ENCODE measurements at regions of chr10 and their contacts with region 1.

Region 1: DNA sequence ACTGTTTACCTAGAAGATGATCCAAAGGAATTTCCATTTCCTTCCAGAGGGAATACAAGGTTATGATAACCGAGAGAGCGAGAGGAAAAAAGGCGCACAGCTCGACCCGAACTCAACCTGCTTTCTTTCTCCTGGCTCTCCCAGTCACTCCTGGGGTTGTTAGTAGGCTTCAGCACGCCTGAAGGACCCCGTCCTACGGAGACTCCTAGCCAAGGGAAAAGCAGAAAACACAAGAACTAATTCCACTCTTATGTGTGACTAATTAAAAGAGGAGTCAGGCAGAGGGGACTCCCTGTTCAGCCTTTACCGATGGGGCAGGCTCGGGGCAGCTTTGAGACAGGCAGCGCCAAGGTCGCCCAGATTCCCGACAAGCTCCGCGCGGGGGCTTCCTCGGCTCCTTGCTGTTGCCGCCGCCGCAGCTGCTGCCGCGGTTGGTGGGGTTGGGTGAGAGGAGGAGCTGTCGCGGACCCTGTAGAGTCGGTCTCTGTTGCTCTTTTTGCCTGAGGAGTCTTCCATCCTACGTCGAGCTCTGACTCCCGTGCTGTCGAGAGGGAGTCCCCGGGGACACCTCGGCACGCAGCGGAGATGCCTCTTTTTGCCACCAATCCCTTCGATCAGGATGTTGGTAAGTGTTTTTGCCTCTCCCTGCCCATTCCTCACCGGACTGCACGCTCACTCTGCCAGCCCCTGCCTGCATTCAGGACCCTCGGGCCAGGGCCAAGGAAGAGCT is at the start of gene STAM:
- DNase-seq: peak; percentile 85
- ATAC-seq: peak; percentile 95
- H3K4me3 ChIP-seq: peak within 1 kb of the TSS; percentile 92 to 96 (median 95)
- H3K27ac ChIP-seq: peak within 1 kb of the TSS; percentile 98
- H3K4me1 ChIP-seq: peaks cover 49% of the 10 kb centered on the region
- H3K27me3 ChIP-seq: no peaks in the 10 kb centered on the region; a peak in 1 of 5 replicates
- CTCF ChIP-seq: peak; percentile 25; the same call in 1 of the 2 replicates
- EP300 ChIP-seq: no peak
- POLR2A ChIP-seq: peak; percentile 81 to 86; a peak in 3 of 4 replicates
- RAD21 ChIP-seq: peak; percentile 17; the same call in 1 of the 2 replicates
- total RNA-seq, gene STAM: 25.1 and 31.7 TPM in 2 replicates

Region 2: DNA sequence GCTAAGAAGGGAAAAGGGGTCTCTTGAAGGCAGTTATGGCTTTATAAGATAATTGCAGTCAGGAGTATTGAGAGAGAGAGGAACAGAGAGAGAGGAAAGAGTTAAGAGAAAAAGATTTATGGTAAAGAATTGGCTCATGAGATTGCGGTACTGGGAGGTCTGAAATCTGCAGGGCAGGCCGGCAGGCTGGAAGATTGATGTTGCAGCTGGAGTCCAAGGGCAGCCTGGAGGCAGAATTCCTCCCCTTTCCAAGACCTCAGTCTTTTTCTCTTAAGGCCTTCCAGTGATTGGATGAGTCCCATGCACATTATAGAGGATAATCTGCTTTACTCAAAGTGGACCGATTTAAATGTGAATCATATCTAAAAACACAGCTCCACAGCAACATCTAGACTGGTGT is 95.2 kb before region 1 on chr10:
- CTCF ChIA-PET with region 1: no interaction called
- POLR2A ChIA-PET with region 1: no interaction called
- in situ Hi-C with region 1: no loop called
- intact Hi-C with region 1: no loop called
- DNase-seq: no peak
- ATAC-seq: no peak
- H3K4me3 ChIP-seq: no peak overlapping the region
- H3K27ac ChIP-seq: no peak overlapping the region
- H3K4me1 ChIP-seq: no peaks in the 10 kb centered on the region
- H3K27me3 ChIP-seq: peaks cover 0 to 5% of the 10 kb centered on the region in 2 experiments; a peak in 1 of 5 replicates
- CTCF ChIP-seq: no peak
- EP300 ChIP-seq: no peak
- POLR2A ChIP-seq: no peak
- RAD21 ChIP-seq: no peak

Region 3: DNA sequence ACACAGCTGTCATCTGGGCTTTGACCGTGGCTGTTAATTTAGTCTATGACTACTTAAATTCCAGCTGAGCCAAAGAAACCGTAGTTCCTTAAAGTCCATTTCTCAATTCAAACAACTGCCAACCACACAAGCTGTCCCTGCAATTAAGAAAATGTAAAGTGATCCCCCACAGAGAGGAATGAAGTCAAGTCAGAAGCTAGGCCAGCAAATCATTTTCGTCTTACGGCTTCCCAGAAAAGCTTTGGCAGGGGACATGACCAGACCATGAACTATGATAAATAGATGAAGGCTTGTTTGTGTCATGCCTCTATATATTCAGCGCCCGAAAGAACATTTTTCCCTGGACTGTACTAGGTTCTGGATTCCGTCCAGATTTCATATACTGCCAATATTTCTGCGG is 81.3 kb before region 1 on chr10:
- CTCF ChIA-PET with region 1: no interaction called
- POLR2A ChIA-PET with region 1: no interaction called
- in situ Hi-C with region 1: no loop called
- intact Hi-C with region 1: no loop called
- DNase-seq: no peak
- ATAC-seq: no peak
- H3K4me3 ChIP-seq: no peak overlapping the region
- H3K27ac ChIP-seq: no peak overlapping the region
- H3K4me1 ChIP-seq: no peaks in the 10 kb centered on the region
- H3K27me3 ChIP-seq: peaks cover 1 to 14% of the 10 kb centered on the region in 2 experiments; a peak in 2 of 5 replicates
- CTCF ChIP-seq: no peak
- EP300 ChIP-seq: no peak
- POLR2A ChIP-seq: no peak
- RAD21 ChIP-seq: no peak

Region 4: GRCh38 chr10:17617031-17617911 is 26.6 kb before region 1 on chr10 and contains the start of gene HACD1:
- CTCF ChIA-PET with region 1: no interaction called
- POLR2A ChIA-PET with region 1: interaction called, 71 read pairs
- in situ Hi-C with region 1: no loop called
- intact Hi-C with region 1: loop called (anchors 2 kb)
- DNase-seq: peak; percentile 73
- ATAC-seq: peak; percentile 90
- H3K4me3 ChIP-seq: peak within 1 kb of the TSS; percentile 69 to 84 (median 79)
- H3K27ac ChIP-seq: peak within 1 kb of the TSS; percentile 97
- H3K4me1 ChIP-seq: peaks cover 11% of the 10 kb centered on the region; the same call in 1 of the 2 replicates
- H3K27me3 ChIP-seq: peaks cover 0 to 8% of the 10 kb centered on the region in 2 experiments; a peak in 1 of 5 replicates
- CTCF ChIP-seq: peak; percentile 80
- EP300 ChIP-seq: 0 out of 4 replicates have a peak, but pooled peaks of 1 of the 2 experiments have one; percentile 14
- POLR2A ChIP-seq: peak; percentile 82 to 83
- RAD21 ChIP-seq: no peak; the same call in none of the 2 replicates
- total RNA-seq, gene HACD1: 31.7 and 47.6 TPM in 2 replicates

Region 5: GRCh38 chr10:17633353-17633752 is 10.6 kb before region 1 on chr10:
- CTCF ChIA-PET with region 1: no interaction called
- POLR2A ChIA-PET with region 1: interaction called, 11 read pairs
- in situ Hi-C with region 1: no loop called
- intact Hi-C with region 1: no loop called
- DNase-seq: no peak
- ATAC-seq: no peak
- H3K4me3 ChIP-seq: no peak overlapping the region
- H3K27ac ChIP-seq: no peak overlapping the region
- H3K4me1 ChIP-seq: peaks cover 13% of the 10 kb centered on the region
- H3K27me3 ChIP-seq: no peaks in the 10 kb centered on the region; a peak in 1 of 5 replicates
- CTCF ChIP-seq: no peak
- EP300 ChIP-seq: no peak
- POLR2A ChIP-seq: no peak
- RAD21 ChIP-seq: no peak

Region 6: GRCh38 chr10:17655567-17656146 is 11.7 kb after region 1 on chr10:
- CTCF ChIA-PET with region 1: no interaction called
- POLR2A ChIA-PET with region 1: interaction called, 26 read pairs
- in situ Hi-C with region 1: no loop called
- intact Hi-C with region 1: no loop called
- DNase-seq: peak; percentile 67
- ATAC-seq: peak; percentile 25; the same call in 2 of the 3 replicates
- H3K4me3 ChIP-seq: no peak overlapping the region
- H3K27ac ChIP-seq: peak overlapping the region; percentile 13
- H3K4me1 ChIP-seq: peaks cover 61% of the 10 kb centered on the region
- H3K27me3 ChIP-seq: no peaks in the 10 kb centered on the region
- CTCF ChIP-seq: no peak
- EP300 ChIP-seq: no peak
- POLR2A ChIP-seq: no peak
- RAD21 ChIP-seq: no peak

Region 7: GRCh38 chr10:17673456-17674061 is 29.6 kb after region 1 on chr10:
- CTCF ChIA-PET with region 1: no interaction called
- POLR2A ChIA-PET with region 1: interaction called, 31 read pairs
- in situ Hi-C with region 1: no loop called
- intact Hi-C with region 1: loop called (anchors 1 kb)
- DNase-seq: peak; percentile 91
- ATAC-seq: peak; percentile 96
- H3K4me3 ChIP-seq: no peak overlapping the region
- H3K27ac ChIP-seq: peak overlapping the region; percentile 54
- H3K4me1 ChIP-seq: peaks cover 66% of the 10 kb centered on the region
- H3K27me3 ChIP-seq: no peaks in the 10 kb centered on the region
- CTCF ChIP-seq: no peak
- EP300 ChIP-seq: peak in 1 of 2 experiments; percentile 81; a peak in 2 of 4 replicates
- POLR2A ChIP-seq: no peak
- RAD21 ChIP-seq: no peak

Region 8: GRCh38 chr10:17847585-17848296 is 203.8 kb after region 1 on chr10:
- CTCF ChIA-PET with region 1: no interaction called
- POLR2A ChIA-PET with region 1: no interaction called
- in situ Hi-C with region 1: no loop called
- intact Hi-C with region 1: no loop called
- DNase-seq: no peak
- ATAC-seq: no peak
- H3K4me3 ChIP-seq: no peak overlapping the region
- H3K27ac ChIP-seq: no peak overlapping the region
- H3K4me1 ChIP-seq: no peaks in the 10 kb centered on the region
- H3K27me3 ChIP-seq: peaks cover 0 to 10% of the 10 kb centered on the region in 2 experiments; a peak in 2 of 5 replicates
- CTCF ChIP-seq: no peak
- EP300 ChIP-seq: no peak
- POLR2A ChIP-seq: no peak
- RAD21 ChIP-seq: no peak